Transverse colon (tissue), 4 donors: ENCODE measurements at regions of chr6 and their contacts with region 1.

Region 1: GRCh38 chr6:167141667-167142432 is 15.9 kb downstream of the GPR31 start:
- DNase-seq: peak; percentile 71
- H3K4me3 ChIP-seq: no peak overlapping the region
- H3K27ac ChIP-seq: no peak overlapping the region
- H3K4me1 ChIP-seq: peaks cover 0 to 8% (median 3%) of the 10 kb centered on the region in 4 donors
- H3K27me3 ChIP-seq: no peaks in the 10 kb centered on the region
- CTCF ChIP-seq: peak; percentile 67 to 80 (median 76)
- EP300 ChIP-seq: no peak
- POLR2A ChIP-seq: no peak

Region 2: GRCh38 chr6:166751051-166751595 is 390.7 kb before region 1 on chr6:
- in situ Hi-C with region 1: loop called in 2 of 4 experiments (anchors 25 kb)
- intact Hi-C with region 1: no loop called
- DNase-seq: no peak
- H3K4me3 ChIP-seq: no peak overlapping the region
- H3K27ac ChIP-seq: no peak overlapping the region
- H3K4me1 ChIP-seq: no peaks in the 10 kb centered on the region
- H3K27me3 ChIP-seq: peaks cover 4% of the 10 kb centered on the region
- CTCF ChIP-seq: no peak
- EP300 ChIP-seq: no peak
- POLR2A ChIP-seq: no peak

Region 3: DNA sequence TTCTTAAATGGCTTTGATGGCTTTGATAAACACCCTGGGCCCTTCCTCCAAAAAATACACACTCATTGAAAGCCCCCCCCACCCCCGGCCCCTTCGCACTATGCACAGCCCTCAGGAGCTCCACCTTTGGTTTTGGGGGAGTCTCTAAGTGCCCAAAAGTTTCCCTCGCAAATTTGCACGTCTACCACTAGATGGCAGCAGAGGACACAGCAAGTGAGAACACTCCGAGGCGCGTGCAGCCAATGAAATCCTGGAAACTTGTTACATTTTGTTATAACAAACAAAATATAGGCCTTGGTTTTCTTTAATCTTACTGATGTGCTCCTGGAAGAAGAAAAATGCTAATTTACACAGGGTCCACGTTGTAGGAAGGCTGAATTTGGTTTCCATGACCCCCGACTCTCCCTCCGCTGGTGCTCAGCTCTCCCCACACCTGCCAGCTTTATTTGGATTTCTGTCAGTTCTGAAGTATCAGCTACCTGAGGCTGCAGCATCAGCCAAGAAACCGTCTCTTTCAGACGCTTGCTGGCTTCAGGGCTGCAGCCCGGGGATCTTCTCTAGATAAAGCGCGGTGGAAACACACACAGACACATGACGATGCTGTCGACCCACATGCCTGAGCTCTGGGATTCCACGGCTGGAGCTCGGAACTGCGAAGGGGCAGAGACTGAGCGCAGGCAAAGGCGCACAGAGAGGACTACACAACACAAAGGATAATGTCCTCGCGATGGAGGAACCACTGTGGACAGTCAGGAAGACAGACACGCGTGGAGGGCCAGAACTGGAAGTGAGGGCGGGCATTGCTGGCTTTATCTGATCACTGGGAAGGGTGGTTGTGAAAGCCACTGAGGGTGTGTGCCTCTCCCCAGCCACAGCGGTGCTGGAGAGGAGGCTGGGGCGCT is 366.4 kb before region 1 on chr6:
- in situ Hi-C with region 1: loop called (anchors 10 to 25 kb)
- intact Hi-C with region 1: loop called (anchors 10 kb)
- DNase-seq: peak; percentile 49
- H3K4me3 ChIP-seq: no peak overlapping the region
- H3K27ac ChIP-seq: no peak overlapping the region
- H3K4me1 ChIP-seq: no peaks in the 10 kb centered on the region
- H3K27me3 ChIP-seq: peaks cover 17% of the 10 kb centered on the region
- CTCF ChIP-seq: peak; percentile 70 to 89 (median 83)
- EP300 ChIP-seq: no peak
- POLR2A ChIP-seq: no peak

Region 4: GRCh38 chr6:167020206-167020605 is 121.6 kb before region 1 on chr6:
- in situ Hi-C with region 1: loop called in 1 of 4 experiments (anchors 25 kb)
- intact Hi-C with region 1: no loop called
- DNase-seq: no peak
- H3K4me3 ChIP-seq: no peak overlapping the region
- H3K27ac ChIP-seq: no peak overlapping the region
- H3K4me1 ChIP-seq: no peaks in the 10 kb centered on the region
- H3K27me3 ChIP-seq: no peaks in the 10 kb centered on the region
- CTCF ChIP-seq: no peak
- EP300 ChIP-seq: no peak
- POLR2A ChIP-seq: no peak

Region 5: DNA sequence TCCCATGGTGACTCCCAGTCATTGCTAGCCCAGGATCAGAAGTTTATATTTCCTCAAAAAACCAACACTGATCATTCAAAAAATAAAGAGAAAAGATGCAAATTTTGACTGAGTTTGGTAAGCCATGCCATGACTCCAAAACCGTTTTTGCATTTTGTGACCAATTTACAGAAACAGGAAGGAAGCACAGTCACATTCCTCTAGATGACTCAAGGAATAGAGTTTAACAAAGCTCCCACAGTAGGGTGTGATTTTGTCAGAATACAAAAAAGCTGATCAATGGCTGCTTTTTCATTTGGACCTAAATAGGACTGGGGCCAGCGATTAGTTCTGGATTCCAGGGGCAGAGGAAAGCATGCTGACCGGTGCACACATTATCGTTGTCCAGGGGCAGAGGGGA is 505.5 kb after region 1 on chr6:
- in situ Hi-C with region 1: no loop called
- intact Hi-C with region 1: no loop called
- DNase-seq: no peak
- H3K4me3 ChIP-seq: no peak overlapping the region
- H3K27ac ChIP-seq: no peak overlapping the region
- H3K4me1 ChIP-seq: no peaks in the 10 kb centered on the region
- H3K27me3 ChIP-seq: no peaks in the 10 kb centered on the region
- CTCF ChIP-seq: no peak
- EP300 ChIP-seq: no peak
- POLR2A ChIP-seq: no peak